A549 (cell line): ENCODE measurements at regions of chr3 and their contacts with region 1.

Region 1: DNA sequence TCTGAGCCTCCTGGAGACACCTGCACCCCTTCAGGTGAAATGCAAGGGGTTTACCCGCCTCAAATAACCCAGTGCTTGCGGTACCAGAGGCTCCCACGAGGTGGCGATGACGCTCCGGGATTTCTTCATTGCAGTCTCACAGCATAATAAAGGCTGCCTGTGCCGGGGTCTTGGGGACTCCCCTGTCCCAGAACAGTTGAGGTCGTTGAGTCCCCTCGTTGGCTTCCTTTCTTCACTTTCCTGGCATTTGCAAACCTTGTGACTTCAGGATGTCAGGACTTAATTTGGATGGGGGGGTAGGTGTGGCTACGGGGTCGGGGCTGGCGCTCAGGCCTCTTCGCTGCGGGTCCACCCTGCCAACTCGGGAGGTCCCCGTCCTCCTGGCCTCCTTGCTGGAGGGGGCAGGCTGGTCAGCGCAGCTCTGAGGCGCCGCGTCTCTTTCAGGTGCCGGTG is 1.3 kb downstream of the GNAT1 start:
- DNase-seq: peak; percentile 50 to 56
- ATAC-seq: peak; percentile 30 to 66; a peak in 3 of 6 replicates
- H3K4me3 ChIP-seq: no peak overlapping the region
- H3K27ac ChIP-seq: no peak overlapping the region
- H3K4me1 ChIP-seq: peaks cover 13% of the 10 kb centered on the region; the same call in 2 of the 3 replicates
- CTCF ChIP-seq: peak; percentile 72
- EP300 ChIP-seq: no peak
- POLR2A ChIP-seq: no peak
- RAD21 ChIP-seq: peak; percentile 78

Region 2: GRCh38 chr3:50121416-50122032 is 71.2 kb before region 1 on chr3:
- CTCF ChIA-PET with region 1: interaction called, 240 read pairs
- POLR2A ChIA-PET with region 1: no interaction called
- DNase-seq: peak; percentile 77 to 91
- ATAC-seq: peak; percentile 78 to 91
- H3K4me3 ChIP-seq: no peak overlapping the region
- H3K27ac ChIP-seq: no peak overlapping the region
- H3K4me1 ChIP-seq: peaks cover 20% of the 10 kb centered on the region
- CTCF ChIP-seq: peak; percentile 74
- EP300 ChIP-seq: no peak
- POLR2A ChIP-seq: no peak
- RAD21 ChIP-seq: peak; percentile 83 to 90

Region 3: DNA sequence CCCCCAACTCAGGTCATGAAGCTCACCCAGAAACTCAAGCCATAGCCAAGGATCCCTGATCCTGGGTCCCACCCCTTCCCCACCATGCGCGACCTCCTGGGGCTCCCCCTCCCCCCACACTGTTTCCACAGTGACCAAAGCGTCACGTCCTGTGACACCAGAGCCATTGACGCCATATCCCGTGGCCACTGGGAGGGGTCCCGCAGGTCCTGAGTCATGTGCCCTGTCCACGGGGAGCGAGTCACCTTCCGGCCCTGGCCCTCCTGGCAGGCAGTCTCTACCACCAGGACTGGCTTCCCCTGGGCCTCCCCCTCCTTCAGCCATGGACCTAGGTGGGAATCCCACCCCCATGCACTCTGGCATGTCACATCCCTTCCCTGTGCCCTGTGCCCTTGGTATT is 22.0 kb before region 1 on chr3:
- CTCF ChIA-PET with region 1: interaction called, 53 read pairs
- POLR2A ChIA-PET with region 1: interaction called, 3 read pairs
- DNase-seq: peak in 1 of 2 experiments; percentile 61
- ATAC-seq: peak; percentile 17 to 43; a peak in 1 of 6 replicates
- H3K4me3 ChIP-seq: no peak overlapping the region
- H3K27ac ChIP-seq: peak overlapping the region; percentile 68 to 94
- H3K4me1 ChIP-seq: peaks cover 69% of the 10 kb centered on the region
- CTCF ChIP-seq: no peak
- EP300 ChIP-seq: no peak
- POLR2A ChIP-seq: no peak
- RAD21 ChIP-seq: no peak

Region 4: GRCh38 chr3:50235716-50236496 is 43.2 kb after region 1 on chr3 and contains the start of gene GNAI2:
- CTCF ChIA-PET with region 1: interaction called, 550 read pairs
- POLR2A ChIA-PET with region 1: no interaction called
- DNase-seq: peak; percentile 93 to 94
- ATAC-seq: peak; percentile 95 to 98
- H3K4me3 ChIP-seq: peak within 1 kb of the TSS; percentile 69
- H3K27ac ChIP-seq: peak within 1 kb of the TSS; percentile 76 to 91
- H3K4me1 ChIP-seq: peaks cover 30% of the 10 kb centered on the region
- CTCF ChIP-seq: no peak
- EP300 ChIP-seq: no peak
- POLR2A ChIP-seq: peak; percentile 84
- RAD21 ChIP-seq: no peak
- polyA plus RNA-seq, gene GNAI2: 67.0 and 67.8 TPM in 2 replicates

Region 5: GRCh38 chr3:50260027-50260941 is 67.6 kb after region 1 on chr3:
- CTCF ChIA-PET with region 1: interaction called, 22 read pairs
- POLR2A ChIA-PET with region 1: no interaction called
- DNase-seq: peak; percentile 68 to 85
- ATAC-seq: peak; percentile 83 to 88
- H3K4me3 ChIP-seq: peak overlapping the region; percentile 85
- H3K27ac ChIP-seq: peak overlapping the region; percentile 94 to 99
- H3K4me1 ChIP-seq: peaks cover 34% of the 10 kb centered on the region
- CTCF ChIP-seq: peak; percentile 83
- EP300 ChIP-seq: no peak
- POLR2A ChIP-seq: peak; percentile 50
- RAD21 ChIP-seq: peak; percentile 57 to 77

Region 6: DNA sequence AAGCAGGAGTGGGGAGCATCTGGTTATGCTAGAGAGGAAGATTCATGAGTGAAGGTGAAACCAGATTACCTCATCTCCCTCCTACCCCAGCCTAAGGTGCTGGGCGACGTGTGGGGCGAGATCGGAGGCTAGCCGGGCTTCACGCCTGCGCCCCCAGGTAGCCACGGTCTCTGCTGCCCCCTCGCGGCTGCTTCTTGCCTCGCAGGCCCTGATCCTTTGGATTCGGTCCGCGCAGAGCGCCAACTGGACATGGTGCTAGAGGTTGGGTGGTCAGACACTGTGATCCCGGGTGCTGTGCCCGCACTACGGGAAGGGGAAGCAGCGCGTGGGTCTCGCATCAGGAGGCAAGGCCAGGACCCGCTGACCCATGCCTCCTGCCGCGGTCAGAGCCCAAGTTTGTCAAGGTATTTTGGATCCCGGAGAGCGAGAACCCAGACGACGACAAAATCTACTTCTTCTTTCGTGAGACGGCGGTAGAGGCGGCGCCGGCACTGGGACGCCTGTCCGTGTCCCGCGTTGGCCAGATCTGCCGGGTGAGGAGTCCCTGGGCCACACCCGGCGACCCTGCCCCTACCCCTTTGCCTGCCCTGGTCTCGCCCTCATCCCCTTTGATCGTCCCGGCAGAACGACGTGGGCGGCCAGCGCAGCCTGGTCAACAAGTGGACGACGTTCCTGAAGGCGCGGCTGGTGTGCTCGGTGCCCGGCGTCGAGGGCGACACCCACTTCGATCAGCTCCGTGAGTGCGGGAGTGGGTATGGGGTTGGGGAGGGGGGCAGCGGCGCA is 80.4 kb after region 1 on chr3:
- CTCF ChIA-PET with region 1: interaction called, 15 read pairs
- POLR2A ChIA-PET with region 1: no interaction called
- DNase-seq: peak; percentile 74 to 77
- ATAC-seq: peak; percentile 43 to 75
- H3K4me3 ChIP-seq: no peak overlapping the region
- H3K27ac ChIP-seq: 0 out of 6 replicates have a peak overlapping the region, but pooled peaks of 1 of the 2 experiments have one; percentile 37
- H3K4me1 ChIP-seq: peaks cover 41% of the 10 kb centered on the region
- CTCF ChIP-seq: peak; percentile 78
- EP300 ChIP-seq: no peak
- POLR2A ChIP-seq: no peak
- RAD21 ChIP-seq: peak; percentile 91